ENCODE measurements at regions of chr14 and their contacts with region 1.

Region 1: GRCh38 chr14:24108336-24108874 is 6.2 kb upstream of the DCAF11 start:
- DNase-seq: no peak
- ATAC-seq: peak in 1 of 2 experiments; percentile 56; a peak in 4 of 6 replicates
- H3K4me3 ChIP-seq: no peak overlapping the region
- H3K27ac ChIP-seq: no peak overlapping the region
- H3K4me1 ChIP-seq: peaks cover 9% of the 10 kb centered on the region; the same call in 1 of the 3 replicates
- CTCF ChIP-seq: no peak
- EP300 ChIP-seq: no peak
- POLR2A ChIP-seq: no peak
- RAD21 ChIP-seq: no peak

Region 2: DNA sequence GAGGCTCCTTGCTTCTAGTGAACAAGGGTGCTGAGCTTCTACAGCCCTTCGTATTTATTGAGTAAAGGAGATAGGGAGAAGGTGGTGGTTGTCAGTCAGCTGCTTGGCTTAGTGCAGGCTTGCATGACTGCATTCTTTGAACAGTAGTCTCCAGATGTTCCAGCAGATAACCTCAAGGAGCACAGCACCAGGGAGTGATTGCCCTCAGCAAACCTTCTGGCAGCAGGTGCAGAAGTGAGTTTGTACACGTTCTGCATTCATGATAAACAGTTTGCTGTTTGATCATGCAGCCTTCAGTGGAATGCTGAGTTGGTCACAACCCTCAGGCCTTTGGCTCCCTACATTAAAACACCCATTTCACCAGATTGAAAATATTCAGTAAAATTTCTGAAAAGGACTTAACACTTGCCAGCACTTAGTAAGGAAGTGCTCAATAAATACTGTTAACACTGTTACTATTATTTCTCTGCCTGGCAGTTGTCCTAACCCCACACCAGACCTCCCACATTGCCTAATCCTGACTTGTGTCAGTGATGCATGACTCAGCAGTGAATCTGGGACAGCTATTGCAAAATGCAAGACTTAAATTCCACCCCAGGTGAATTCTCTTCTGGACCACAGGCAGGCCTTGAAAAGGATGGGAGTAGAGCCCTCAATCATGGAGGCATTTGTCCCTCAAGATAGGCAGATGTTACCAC is 75.5 kb before region 1 on chr14:
- CTCF ChIA-PET with region 1: interaction called, 14 read pairs
- POLR2A ChIA-PET with region 1: interaction called, 4 read pairs
- DNase-seq: peak; percentile 41 to 92
- ATAC-seq: peak; percentile 22 to 61
- H3K4me3 ChIP-seq: no peak overlapping the region
- H3K27ac ChIP-seq: peak overlapping the region; percentile 86 to 95
- H3K4me1 ChIP-seq: peaks cover 52% of the 10 kb centered on the region
- CTCF ChIP-seq: no peak
- EP300 ChIP-seq: peak; percentile 59 to 85; a peak in 3 of 5 replicates
- POLR2A ChIP-seq: no peak
- RAD21 ChIP-seq: 0 out of 5 replicates have a peak, but pooled peaks of 1 of the 2 experiments have one; percentile 24

Region 3: DNA sequence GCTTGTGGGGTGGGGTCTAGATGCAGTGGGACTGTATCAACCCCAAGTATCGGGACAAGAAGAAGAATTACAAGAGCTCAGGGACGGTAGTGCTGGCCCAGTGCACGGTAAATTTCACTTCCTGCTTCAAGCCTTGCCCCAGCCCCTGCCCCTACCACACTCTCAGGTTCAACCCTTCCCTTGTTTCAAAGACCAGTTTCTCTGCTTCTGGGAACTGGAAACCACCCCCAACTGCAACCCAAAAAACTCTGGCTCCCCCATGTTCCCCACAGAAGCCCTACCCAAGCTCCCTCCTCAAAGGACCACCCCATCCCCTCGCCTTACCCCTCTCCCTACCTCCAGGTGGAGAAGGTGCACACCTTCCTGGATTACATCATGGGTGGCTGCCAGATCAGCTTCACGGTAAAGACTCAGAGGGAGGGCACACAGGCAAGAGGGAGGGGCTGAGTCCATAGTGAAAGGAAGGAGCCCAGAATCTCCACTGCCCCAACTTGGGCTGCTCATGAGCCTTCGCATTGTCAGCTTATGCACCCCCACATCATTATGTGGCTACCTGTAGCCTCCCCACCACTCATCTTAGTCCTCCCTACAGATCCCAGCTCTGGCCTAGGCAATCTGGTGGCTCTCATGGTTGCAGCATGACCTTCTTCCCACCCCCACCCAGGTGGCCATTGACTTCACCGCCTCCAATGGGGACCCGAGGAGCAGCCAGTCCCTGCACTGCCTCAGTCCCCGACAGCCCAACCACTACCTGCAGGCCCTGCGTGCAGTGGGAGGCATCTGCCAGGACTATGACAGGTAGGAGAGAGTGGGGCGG is 32.7 kb before region 1 on chr14:
- CTCF ChIA-PET with region 1: interaction called, 34 read pairs
- POLR2A ChIA-PET with region 1: interaction called, 6 read pairs
- DNase-seq: no peak
- ATAC-seq: no peak
- H3K4me3 ChIP-seq: no peak overlapping the region
- H3K27ac ChIP-seq: no peak overlapping the region
- H3K4me1 ChIP-seq: peaks cover 7% of the 10 kb centered on the region
- CTCF ChIP-seq: no peak
- EP300 ChIP-seq: no peak
- POLR2A ChIP-seq: no peak
- RAD21 ChIP-seq: no peak

Region 4: DNA sequence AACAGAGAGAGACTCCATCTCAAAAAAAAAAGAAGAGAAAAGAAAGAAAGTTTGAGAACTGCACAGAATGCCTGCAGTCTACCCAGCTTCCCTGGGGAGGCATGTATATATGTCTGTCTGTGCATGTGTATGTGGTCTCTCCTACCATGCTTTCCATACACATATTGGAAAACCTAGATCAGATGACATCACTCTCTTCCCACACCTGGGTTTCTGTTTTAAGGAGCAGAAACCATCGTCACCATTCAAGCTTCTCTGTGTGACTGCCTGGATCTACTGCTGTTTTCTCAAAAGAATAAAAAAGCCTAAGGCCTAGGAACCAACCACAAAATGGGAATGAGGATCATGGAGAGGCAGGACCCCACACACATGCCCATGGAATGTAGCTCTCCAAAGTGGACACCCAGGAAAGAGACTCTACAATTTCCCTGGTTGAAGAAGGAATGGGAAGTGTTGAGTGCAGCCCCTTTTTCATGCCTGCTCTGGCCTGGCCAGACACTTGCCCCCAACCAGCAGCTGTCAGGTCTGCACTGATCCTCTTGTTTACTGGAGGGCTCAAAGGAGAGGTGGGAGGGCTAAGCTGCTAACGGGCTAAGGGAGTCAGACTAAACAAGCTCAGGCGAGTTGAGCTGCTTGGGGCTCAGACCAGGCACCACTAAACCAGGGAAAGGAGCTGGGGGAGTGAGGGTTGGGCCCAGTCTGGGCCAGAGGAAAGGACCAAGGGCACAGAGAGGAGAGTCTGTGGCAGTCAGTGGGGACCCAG is 22.0 kb before region 1 on chr14:
- CTCF ChIA-PET with region 1: interaction called, 225 read pairs
- POLR2A ChIA-PET with region 1: interaction called, 6 read pairs
- DNase-seq: no peak
- ATAC-seq: no peak
- H3K4me3 ChIP-seq: no peak overlapping the region
- H3K27ac ChIP-seq: no peak overlapping the region
- H3K4me1 ChIP-seq: peaks cover 5% of the 10 kb centered on the region
- CTCF ChIP-seq: no peak
- EP300 ChIP-seq: no peak
- POLR2A ChIP-seq: no peak
- RAD21 ChIP-seq: no peak

Region 5: DNA sequence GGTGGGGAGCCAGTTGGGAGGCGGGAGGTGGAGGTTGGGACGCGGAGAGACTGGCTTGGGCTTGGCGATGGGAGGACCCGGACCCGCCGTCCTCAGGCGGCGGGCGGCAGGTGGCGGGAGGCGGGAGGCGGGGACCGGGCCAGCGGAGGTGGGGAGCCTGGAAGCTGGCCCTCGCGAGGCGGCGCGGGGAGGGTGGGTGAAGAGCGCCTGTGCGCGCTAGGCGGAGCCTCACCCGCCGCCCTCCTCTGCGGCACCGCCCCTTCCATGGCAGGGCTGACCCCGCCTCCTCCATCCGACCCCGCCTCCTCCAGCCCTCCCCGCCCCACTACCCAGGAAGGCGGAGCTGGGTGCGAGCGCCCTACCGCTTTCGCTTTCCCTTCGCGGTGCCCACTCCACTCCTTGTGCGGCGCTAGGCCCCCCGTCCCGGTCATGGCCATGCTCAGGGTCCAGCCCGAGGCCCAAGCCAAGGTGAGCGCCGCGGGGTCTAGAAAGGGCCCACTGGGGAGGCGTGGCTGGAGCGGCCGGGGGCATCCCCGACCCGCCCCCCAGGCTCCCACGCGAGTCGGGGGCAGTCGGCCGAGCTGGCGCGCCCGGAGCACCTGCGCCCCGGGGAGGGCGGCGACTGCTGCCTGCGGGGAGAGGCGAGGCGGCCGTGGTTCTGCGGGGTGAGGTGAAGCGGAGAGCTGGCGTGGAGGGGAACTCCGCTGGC is 27.6 kb after region 1 on chr14 and contains the start of gene PSME1:
- CTCF ChIA-PET with region 1: interaction called, 12 read pairs
- POLR2A ChIA-PET with region 1: interaction called, 48 read pairs
- DNase-seq: peak; percentile 81 to 86
- ATAC-seq: peak; percentile 82 to 92
- H3K4me3 ChIP-seq: peak within 1 kb of the TSS; percentile 88
- H3K27ac ChIP-seq: peak within 1 kb of the TSS; percentile 96 to 98
- H3K4me1 ChIP-seq: peaks cover 32% of the 10 kb centered on the region
- CTCF ChIP-seq: no peak
- EP300 ChIP-seq: no peak
- POLR2A ChIP-seq: peak; percentile 41
- RAD21 ChIP-seq: no peak
- polyA plus RNA-seq, gene PSME1: 77.3 and 83.6 TPM in 2 replicates

Region 6: DNA sequence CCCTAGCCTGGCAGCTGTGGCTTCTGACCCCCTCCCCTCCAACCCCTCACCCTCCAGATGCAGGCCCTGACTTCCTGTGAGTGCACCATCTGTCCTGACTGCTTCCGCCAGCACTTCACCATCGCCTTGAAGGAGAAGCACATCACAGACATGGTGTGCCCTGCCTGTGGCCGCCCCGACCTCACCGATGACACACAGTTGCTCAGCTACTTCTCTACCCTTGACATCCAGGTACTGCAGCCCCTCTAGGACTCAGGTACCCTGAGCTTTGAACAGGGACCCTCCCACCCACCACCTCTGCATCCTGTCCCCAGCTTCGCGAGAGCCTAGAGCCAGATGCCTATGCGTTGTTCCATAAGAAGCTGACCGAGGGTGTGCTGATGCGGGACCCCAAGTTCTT is 46.7 kb after region 1 on chr14:
- CTCF ChIA-PET with region 1: interaction called, 47 read pairs
- POLR2A ChIA-PET with region 1: interaction called, 16 read pairs
- DNase-seq: no peak
- ATAC-seq: no peak
- H3K4me3 ChIP-seq: no peak overlapping the region
- H3K27ac ChIP-seq: no peak overlapping the region
- H3K4me1 ChIP-seq: peaks cover 5% of the 10 kb centered on the region; the same call in 2 of the 3 replicates
- CTCF ChIP-seq: no peak
- EP300 ChIP-seq: no peak
- POLR2A ChIP-seq: no peak
- RAD21 ChIP-seq: no peak

Measured in A549 (cell line).